Activated CD8-positive, alpha-beta T cell treated with anti-CD3 and anti-CD28 coated beads, Interleukin-2, amount 10 ng/mL, durations not matched to agents 7 days and 5 days (primary cell): ENCODE measurements at regions of chr1 and their contacts with region 1.

Region 1: GRCh38 chr1:157090196-157090647 is 9.4 kb downstream of the ETV3L start:
- DNase-seq: peak; percentile 89
- ATAC-seq: peak; percentile 94
- H3K4me3 Mint-ChIP-seq: no peak overlapping the region
- H3K27ac Mint-ChIP-seq: no peak overlapping the region
- H3K4me1 Mint-ChIP-seq: no peaks in the 10 kb centered on the region
- H3K27me3 Mint-ChIP-seq: no peaks in the 10 kb centered on the region

Region 2: DNA sequence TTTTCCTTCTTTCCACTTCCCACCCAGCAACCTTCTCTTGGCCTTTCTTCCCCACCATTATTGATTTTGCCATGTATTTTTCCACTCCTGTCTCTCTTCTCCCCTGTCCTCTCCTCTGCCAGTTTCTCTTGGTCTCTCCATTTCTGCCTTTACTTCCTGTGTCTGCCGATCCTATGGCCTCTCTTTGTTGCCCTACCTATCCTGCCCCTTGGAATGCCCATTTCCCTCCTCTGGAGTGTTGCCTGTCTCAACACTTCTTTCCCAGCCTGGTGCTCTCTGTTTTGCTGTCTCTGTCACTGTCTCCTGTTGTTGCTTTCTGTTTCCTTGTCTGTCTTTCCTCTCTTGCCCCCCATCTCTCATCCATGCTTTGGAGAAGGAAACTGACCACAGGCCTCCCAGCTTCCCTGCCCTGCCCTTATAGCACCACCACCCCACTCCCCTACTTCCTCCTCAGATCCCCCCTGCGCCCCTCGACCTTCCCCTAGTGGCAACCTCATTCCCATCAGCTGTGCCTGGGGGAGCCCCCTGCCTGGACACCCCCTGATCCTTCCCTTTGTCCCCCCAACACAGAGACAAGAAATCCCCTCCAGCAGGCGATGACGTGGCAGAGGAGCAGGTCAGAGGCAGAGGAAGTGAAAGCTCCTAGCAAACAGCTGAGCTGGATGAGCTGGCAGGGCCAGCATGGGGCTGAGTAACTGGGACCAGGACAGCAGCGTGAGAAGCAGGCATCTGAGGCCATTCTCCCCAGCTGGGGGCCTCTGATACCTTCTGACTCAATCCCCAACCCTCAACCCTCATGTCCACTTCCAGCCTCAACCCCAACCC is 16.0 kb after region 1 on chr1:
- CTCF ChIA-PET with region 1: interaction called, 42 read pairs
- POLR2A ChIA-PET with region 1: no interaction called
- DNase-seq: peak; percentile 39
- ATAC-seq: peak; percentile 37
- H3K4me3 Mint-ChIP-seq: no peak overlapping the region
- H3K27ac Mint-ChIP-seq: no peak overlapping the region
- H3K4me1 Mint-ChIP-seq: peaks cover 7% of the 10 kb centered on the region
- H3K27me3 Mint-ChIP-seq: peaks cover 57% of the 10 kb centered on the region

Region 3: GRCh38 chr1:157138220-157139051 is 48.2 kb after region 1 on chr1 and contains the start of gene ETV3:
- CTCF ChIA-PET with region 1: interaction called, 64 read pairs
- POLR2A ChIA-PET with region 1: no interaction called
- DNase-seq: peak; percentile 94
- ATAC-seq: peak; percentile 85
- H3K4me3 Mint-ChIP-seq: peak within 1 kb of the TSS; percentile 95
- H3K27ac Mint-ChIP-seq: peak within 1 kb of the TSS; percentile 92
- H3K4me1 Mint-ChIP-seq: peaks cover 53% of the 10 kb centered on the region
- H3K27me3 Mint-ChIP-seq: no peaks in the 10 kb centered on the region
- total RNA-seq, gene ETV3: 38.2 to 40.2 TPM

Region 4: GRCh38 chr1:157163273-157164127 is 73.3 kb after region 1 on chr1:
- CTCF ChIA-PET with region 1: interaction called, 470 read pairs
- POLR2A ChIA-PET with region 1: no interaction called
- DNase-seq: peak; percentile 79
- ATAC-seq: peak; percentile 74
- H3K4me3 Mint-ChIP-seq: peak overlapping the region; percentile 11
- H3K27ac Mint-ChIP-seq: no peak overlapping the region
- H3K4me1 Mint-ChIP-seq: peaks cover 3% of the 10 kb centered on the region
- H3K27me3 Mint-ChIP-seq: peaks cover 10% of the 10 kb centered on the region